ENCODE measurements at regions of chr3 and their contacts with region 1.

Region 1: DNA sequence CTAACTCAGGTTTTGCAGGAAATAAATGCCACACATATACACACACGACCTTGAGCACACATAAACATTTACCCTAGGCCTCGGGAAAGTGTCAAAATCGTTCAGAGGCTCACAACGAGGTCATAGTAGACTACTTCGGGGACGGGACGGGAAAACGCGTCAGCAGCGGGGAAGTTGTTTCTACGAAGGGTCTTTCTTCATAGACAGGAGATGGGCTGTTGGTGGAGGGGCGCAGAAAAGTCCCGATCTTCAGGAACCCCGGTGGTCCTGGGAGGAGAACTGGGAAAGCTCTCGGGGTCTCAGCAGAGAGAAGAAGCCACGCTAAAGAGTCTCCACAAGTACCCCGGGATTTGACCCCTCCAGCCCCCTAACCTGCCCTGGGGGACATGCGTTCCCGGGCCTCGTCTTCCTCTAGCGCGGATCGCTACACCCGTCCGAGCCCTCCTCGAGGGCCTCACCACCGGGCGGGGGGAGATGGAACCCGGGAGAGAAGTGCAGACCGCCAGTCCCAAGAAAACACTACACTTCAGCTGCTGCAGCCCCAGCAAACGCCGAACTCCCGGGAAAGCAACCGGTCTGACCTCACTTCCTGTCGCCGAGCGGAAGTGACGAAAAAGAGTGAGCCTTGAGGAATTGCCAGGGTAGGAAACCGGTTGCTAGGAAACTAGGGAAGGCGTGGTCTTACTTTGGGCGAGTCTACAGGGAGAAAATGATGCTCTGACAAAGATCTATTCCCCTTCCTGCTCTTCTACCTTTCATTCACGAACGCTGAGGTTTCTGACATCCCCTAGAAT is at the start of gene PIK3R4:
- DNase-seq: peak; percentile 98
- ATAC-seq: peak; percentile 77
- H3K4me3 Mint-ChIP-seq: peak within 1 kb of the TSS; percentile 79
- H3K27ac Mint-ChIP-seq: peak within 1 kb of the TSS; percentile 94
- H3K4me1 Mint-ChIP-seq: peaks cover 51% of the 10 kb centered on the region
- H3K27me3 Mint-ChIP-seq: no peaks in the 10 kb centered on the region
- total RNA-seq, gene PIK3R4: 23.3 to 30.6 TPM

Region 2: GRCh38 chr3:130759699-130760338 is 13.4 kb after region 1 on chr3:
- CTCF ChIA-PET with region 1: interaction called, 15 read pairs
- DNase-seq: peak; percentile 73
- ATAC-seq: peak; percentile 83
- H3K4me3 Mint-ChIP-seq: no peak overlapping the region
- H3K27ac Mint-ChIP-seq: no peak overlapping the region
- H3K4me1 Mint-ChIP-seq: peaks cover 11% of the 10 kb centered on the region
- H3K27me3 Mint-ChIP-seq: peaks cover 3% of the 10 kb centered on the region